ENCODE measurements at regions of chr11 and their contacts with region 1.

Region 1: GRCh38 chr11:42906226-42906625 is 405.6 kb upstream of the API5 start:
- DNase-seq: no peak
- H3K4me3 ChIP-seq: no peak overlapping the region
- CTCF ChIP-seq: no peak

Region 2: DNA sequence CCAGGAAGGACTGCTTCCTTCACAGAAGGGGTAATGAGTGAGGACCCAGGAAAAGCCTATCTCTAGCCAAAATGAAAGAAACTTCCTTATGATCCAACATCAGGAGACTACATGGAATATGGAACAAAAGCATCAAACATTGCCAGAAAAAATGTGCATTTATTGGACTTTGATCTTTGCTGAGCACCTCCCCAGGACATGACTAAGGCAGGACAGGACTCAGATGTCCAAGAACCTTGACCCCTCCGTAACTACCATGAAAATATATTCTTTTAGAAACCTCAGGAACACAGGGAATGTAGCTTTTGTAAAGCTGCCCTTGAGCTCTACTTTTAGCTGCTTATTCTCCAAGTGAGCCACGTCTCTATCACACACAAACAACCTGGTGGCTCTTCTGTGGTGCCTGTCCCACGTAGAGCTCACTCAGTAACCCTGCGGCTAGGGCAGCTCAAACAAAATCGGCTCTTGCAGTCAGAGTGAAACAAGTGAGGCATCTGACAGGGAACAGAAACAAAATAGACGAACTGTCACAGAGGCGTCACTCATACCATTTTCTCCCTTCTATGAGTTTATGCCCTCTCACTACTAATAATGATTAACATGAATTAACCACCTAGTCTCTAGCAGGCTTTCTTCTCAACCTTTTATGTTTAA is 65.9 kb before region 1 on chr11:
- in situ Hi-C with region 1: no loop called
- DNase-seq: no peak
- H3K4me3 ChIP-seq: no peak overlapping the region
- CTCF ChIP-seq: no peak

Region 3: GRCh38 chr11:42870480-42870879 is 35.7 kb before region 1 on chr11:
- in situ Hi-C with region 1: loop called (anchors 5 kb)
- DNase-seq: no peak
- H3K4me3 ChIP-seq: no peak overlapping the region
- CTCF ChIP-seq: no peak